Activated naive CD4-positive, alpha-beta T cell treated with anti-CD3 and anti-CD28 coated beads for 36 hours (primary cell): ENCODE measurements at regions of chr4 and their contacts with region 1.

Region 1: DNA sequence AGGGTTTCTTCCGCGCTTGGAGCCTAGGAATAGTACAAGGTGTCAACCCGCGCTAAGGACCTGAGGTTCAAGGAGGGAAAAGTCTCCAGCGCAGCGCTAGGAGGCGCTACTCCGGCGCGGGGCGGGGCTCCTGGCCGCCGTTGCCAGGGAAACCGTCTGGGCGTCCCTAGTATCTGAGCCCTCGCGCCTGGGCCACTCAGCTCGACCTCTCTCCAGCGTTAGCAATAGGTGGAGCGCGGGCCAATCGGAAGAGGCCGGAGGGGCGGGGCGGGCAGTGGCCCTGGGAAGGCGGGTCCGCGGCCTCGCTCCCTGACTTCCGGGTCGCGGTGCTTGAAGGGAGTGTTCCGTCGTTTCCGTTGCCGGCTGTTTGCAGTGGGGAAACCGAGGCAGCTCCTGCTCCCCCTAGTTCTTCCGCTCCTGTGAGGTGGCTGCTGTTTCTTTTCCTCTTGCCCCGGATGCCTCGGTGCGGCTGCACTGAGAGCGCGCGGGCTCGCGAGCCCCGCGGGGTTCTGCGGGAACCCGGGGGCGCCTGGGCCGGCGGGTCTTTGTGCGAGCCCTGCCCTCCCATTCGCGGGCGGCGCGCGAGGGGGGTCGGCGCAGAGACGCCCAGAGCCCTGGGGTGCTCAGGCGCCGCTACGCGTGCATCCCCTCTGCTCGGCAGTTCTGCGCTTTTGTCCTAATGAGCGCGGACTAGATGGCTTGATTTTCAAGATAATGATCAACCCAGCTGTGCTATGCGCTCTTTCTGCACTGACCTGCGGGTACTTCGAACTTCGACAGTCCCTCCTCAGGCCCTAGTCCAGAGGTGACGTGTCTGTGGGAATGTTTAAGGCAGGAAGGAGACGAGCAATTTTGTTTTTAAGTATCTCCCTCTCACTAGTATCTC is at the start of gene ELMOD2:
- DNase-seq: peak; percentile 98
- H3K4me3 Mint-ChIP-seq: peak within 1 kb of the TSS; percentile 85
- H3K27ac Mint-ChIP-seq: peak within 1 kb of the TSS; percentile 35
- H3K4me1 Mint-ChIP-seq: peaks cover 11% of the 10 kb centered on the region
- H3K27me3 Mint-ChIP-seq: no peaks in the 10 kb centered on the region
- total RNA-seq, gene ELMOD2: 14.4 to 14.8 TPM

Region 2: DNA sequence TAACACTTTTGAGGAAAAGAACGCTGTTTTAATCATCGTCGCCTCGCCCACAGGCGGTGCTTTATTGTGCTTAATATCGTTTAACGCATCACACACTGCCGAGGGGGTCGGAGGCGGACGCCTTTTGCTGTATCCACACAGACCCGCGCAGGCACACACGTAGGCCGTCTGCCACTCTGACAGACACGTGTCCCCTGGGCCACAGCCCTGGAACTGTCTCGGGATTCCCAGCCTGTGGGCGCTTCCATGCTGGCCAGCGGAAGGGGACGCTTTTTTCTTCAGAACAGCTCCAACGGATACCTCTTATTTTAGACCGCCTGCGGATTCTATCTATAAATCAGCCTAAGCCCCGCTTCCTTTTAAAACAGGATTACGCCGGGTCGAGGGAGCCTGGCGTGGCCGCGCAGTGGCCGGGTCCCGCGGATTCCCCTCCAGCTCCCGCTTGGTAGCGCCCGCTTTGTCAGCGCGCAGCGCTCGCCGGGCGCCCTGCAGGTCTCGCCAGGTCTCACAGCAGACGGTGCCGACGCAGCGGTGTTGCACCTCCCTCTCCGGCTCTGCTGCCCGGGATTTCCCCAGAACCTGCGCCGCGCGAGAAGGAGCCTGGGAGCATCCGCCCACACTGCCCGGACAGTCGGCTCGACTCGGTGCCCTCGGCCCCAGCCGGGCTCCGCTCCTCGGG is 1508.7 kb before region 1 on chr4 and contains the start of gene NOCT:
- CTCF ChIA-PET with region 1: no interaction called
- intact Hi-C with region 1: loop called (anchors 10 kb)
- DNase-seq: peak; percentile 97
- H3K4me3 Mint-ChIP-seq: peak within 1 kb of the TSS; percentile 91
- H3K27ac Mint-ChIP-seq: peak within 1 kb of the TSS; percentile 96
- H3K4me1 Mint-ChIP-seq: peaks cover 48% of the 10 kb centered on the region
- H3K27me3 Mint-ChIP-seq: no peaks in the 10 kb centered on the region
- total RNA-seq, gene NOCT: 9.3 to 10.4 TPM

Region 3: GRCh38 chr4:139301113-139301820 is 1222.8 kb before region 1 on chr4 and contains the start of gene NAA15:
- CTCF ChIA-PET with region 1: no interaction called
- intact Hi-C with region 1: loop called (anchors 5 kb)
- DNase-seq: peak; percentile 98
- H3K4me3 Mint-ChIP-seq: peak within 1 kb of the TSS; percentile 100
- H3K27ac Mint-ChIP-seq: peak within 1 kb of the TSS; percentile 98
- H3K4me1 Mint-ChIP-seq: peaks cover 56% of the 10 kb centered on the region
- H3K27me3 Mint-ChIP-seq: no peaks in the 10 kb centered on the region
- total RNA-seq, gene NAA15: 91.5 to 94.0 TPM

Region 4: DNA sequence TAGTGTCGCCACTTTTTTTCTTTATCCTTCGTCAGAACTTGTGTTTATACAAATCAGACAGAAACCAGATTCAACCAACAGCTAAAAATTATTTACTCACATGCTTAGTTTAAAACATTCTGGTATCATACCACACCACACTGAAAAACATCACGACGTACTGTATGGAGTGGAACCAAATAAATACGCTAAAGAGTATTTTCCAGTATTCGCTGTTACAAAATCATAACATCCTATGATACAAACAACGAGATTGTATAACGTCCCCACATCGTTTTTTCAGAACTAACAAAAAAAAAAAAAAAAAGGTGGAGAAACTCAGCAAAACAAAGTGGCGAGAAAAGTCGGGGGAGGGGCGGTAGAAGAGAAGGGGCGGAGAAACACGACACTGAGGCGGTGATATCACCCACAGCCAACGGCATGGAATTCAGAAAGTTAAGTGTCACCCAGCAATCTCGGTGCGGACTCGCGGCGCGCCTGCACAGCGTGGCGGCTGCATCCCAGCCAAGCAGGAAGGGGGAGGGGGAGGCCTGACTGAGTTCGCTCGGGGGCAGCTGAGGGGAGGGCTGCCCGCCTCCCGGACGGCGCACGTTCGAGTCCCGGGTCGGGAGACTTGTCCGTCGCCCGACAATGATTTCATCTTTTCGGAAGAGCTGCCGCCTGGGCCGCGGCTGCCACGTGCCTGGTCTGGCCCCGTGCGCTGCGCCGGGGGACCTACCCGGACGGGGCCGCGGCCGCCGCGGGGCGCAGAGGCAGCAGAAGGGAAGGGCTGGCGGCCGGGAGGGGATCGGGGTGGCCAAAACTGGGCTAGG is 969.0 kb before region 1 on chr4:
- CTCF ChIA-PET with region 1: no interaction called
- intact Hi-C with region 1: loop called (anchors 5 kb)
- DNase-seq: peak; percentile 92
- H3K4me3 Mint-ChIP-seq: peak overlapping the region; percentile 94
- H3K27ac Mint-ChIP-seq: peak overlapping the region; percentile 90
- H3K4me1 Mint-ChIP-seq: peaks cover 41% of the 10 kb centered on the region
- H3K27me3 Mint-ChIP-seq: no peaks in the 10 kb centered on the region

Region 5: GRCh38 chr4:140556372-140557085 is 32.4 kb after region 1 on chr4:
- CTCF ChIA-PET with region 1: interaction called, 10 read pairs
- intact Hi-C with region 1: loop called (anchors 1 kb)
- DNase-seq: peak; percentile 48
- H3K4me3 Mint-ChIP-seq: no peak overlapping the region
- H3K27ac Mint-ChIP-seq: no peak overlapping the region
- H3K4me1 Mint-ChIP-seq: peaks cover 16% of the 10 kb centered on the region
- H3K27me3 Mint-ChIP-seq: peaks cover 8% of the 10 kb centered on the region

Region 6: DNA sequence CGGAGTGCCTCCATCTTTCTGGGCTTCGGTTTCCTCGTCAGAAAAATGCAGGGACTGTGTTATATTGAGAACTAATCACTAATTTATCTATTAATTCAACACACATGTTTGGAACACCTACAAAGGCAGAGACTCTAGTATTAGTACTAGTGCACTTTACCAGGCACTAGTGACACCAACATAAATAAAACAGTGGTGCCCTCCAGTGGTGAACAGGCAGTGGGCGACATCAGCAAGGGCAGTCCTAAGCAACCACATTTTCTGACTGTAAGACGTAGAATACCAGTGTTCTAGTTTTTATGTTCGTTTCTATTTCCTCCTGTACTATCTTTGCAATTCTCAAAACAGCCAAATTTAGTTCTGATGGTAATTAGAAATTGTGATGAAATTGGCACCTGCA is 113.7 kb after region 1 on chr4:
- CTCF ChIA-PET with region 1: no interaction called
- intact Hi-C with region 1: loop called (anchors 1 kb)
- DNase-seq: peak; percentile 65
- H3K4me3 Mint-ChIP-seq: no peak overlapping the region
- H3K27ac Mint-ChIP-seq: no peak overlapping the region
- H3K4me1 Mint-ChIP-seq: no peaks in the 10 kb centered on the region
- H3K27me3 Mint-ChIP-seq: peaks cover 14% of the 10 kb centered on the region

Region 7: GRCh38 chr4:141220655-141221605 is 696.8 kb after region 1 on chr4 and contains the start of gene ZNF330:
- CTCF ChIA-PET with region 1: no interaction called
- intact Hi-C with region 1: loop called (anchors 1 kb)
- DNase-seq: peak; percentile 89
- H3K4me3 Mint-ChIP-seq: peak within 1 kb of the TSS; percentile 94
- H3K27ac Mint-ChIP-seq: peak within 1 kb of the TSS; percentile 94
- H3K4me1 Mint-ChIP-seq: peaks cover 43% of the 10 kb centered on the region
- H3K27me3 Mint-ChIP-seq: no peaks in the 10 kb centered on the region
- total RNA-seq, gene ZNF330: 67.2 to 75.5 TPM